H1 (cell line): ENCODE measurements at regions of chr11 and their contacts with region 1.

Region 1: GRCh38 chr11:131694526-131695424 is 324.4 kb downstream of the NTM start:
- DNase-seq: peak; percentile 63 to 96
- H3K4me3 ChIP-seq: peak overlapping the region in 1 of 4 experiments; percentile 35; a peak in 1 of 8 replicates
- H3K27ac ChIP-seq: no peak overlapping the region
- H3K4me1 ChIP-seq: peaks cover 0 to 5% (median 3%) of the 10 kb centered on the region in 4 experiments; a peak in 5 of 7 replicates
- H3K27me3 ChIP-seq: peaks cover 0 to 38% (median 21%) of the 10 kb centered on the region in 4 experiments; a peak in 6 of 7 replicates
- CTCF ChIP-seq: peak; percentile 94 to 99 (median 99)
- EP300 ChIP-seq: no peak
- POLR2A ChIP-seq: no peak
- RAD21 ChIP-seq: peak; percentile 89 to 90

Region 2: DNA sequence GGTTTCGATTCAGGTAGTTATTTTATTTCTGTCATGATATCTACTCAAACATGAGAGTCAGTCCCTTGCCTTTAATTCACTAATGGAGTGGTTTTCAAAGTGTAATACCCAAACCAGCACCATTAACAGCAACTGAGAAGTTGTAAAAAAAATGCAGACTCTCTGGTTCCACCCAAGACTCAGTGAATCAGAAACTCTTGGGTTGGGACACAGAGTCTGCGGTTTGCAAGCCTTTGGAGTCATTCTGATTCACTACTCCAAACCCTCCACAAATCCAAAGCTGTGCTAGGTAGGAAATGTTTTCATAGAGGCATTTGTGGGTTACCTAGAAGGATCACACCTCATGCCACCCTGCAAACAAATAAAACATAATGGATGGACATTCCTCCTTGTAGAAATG is 15.7 kb after region 1 on chr11:
- CTCF ChIA-PET with region 1: interaction called, 30 read pairs
- POLR2A ChIA-PET with region 1: interaction called, 3 read pairs
- DNase-seq: no peak
- H3K4me3 ChIP-seq: no peak overlapping the region
- H3K27ac ChIP-seq: no peak overlapping the region
- H3K4me1 ChIP-seq: no peaks in the 10 kb centered on the region
- H3K27me3 ChIP-seq: no peaks in the 10 kb centered on the region
- CTCF ChIP-seq: no peak
- EP300 ChIP-seq: no peak
- POLR2A ChIP-seq: no peak
- RAD21 ChIP-seq: no peak

Region 3: DNA sequence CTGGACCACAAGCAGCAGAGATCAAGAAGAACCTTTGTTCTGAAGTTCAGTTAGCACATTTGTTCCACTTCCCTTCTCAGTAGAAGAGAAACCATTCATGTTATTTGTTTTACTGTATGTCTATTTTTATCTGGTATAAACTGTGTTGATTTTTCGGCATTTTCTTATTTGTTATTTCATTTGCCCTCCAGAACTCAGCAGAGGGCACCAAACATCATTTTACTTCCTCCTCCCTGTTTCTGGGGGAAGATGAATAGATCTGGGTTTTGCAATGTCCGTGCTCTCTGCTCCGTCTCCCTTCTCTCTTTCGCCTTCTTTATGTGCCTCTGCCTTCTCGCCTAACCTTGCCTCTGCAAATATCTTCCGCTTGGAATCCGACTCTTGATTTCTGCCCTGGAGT is 42.6 kb after region 1 on chr11:
- CTCF ChIA-PET with region 1: interaction called, 11 read pairs
- POLR2A ChIA-PET with region 1: no interaction called
- DNase-seq: no peak
- H3K4me3 ChIP-seq: no peak overlapping the region
- H3K27ac ChIP-seq: no peak overlapping the region
- H3K4me1 ChIP-seq: peaks cover 0 to 6% (median 0%) of the 10 kb centered on the region in 4 experiments; a peak in 1 of 7 replicates
- H3K27me3 ChIP-seq: no peaks in the 10 kb centered on the region
- CTCF ChIP-seq: peak in 1 of 3 experiments; percentile 6; a peak in 1 of 4 replicates
- EP300 ChIP-seq: no peak
- POLR2A ChIP-seq: no peak
- RAD21 ChIP-seq: peak; percentile 21 to 32; a peak in 3 of 4 replicates

Region 4: DNA sequence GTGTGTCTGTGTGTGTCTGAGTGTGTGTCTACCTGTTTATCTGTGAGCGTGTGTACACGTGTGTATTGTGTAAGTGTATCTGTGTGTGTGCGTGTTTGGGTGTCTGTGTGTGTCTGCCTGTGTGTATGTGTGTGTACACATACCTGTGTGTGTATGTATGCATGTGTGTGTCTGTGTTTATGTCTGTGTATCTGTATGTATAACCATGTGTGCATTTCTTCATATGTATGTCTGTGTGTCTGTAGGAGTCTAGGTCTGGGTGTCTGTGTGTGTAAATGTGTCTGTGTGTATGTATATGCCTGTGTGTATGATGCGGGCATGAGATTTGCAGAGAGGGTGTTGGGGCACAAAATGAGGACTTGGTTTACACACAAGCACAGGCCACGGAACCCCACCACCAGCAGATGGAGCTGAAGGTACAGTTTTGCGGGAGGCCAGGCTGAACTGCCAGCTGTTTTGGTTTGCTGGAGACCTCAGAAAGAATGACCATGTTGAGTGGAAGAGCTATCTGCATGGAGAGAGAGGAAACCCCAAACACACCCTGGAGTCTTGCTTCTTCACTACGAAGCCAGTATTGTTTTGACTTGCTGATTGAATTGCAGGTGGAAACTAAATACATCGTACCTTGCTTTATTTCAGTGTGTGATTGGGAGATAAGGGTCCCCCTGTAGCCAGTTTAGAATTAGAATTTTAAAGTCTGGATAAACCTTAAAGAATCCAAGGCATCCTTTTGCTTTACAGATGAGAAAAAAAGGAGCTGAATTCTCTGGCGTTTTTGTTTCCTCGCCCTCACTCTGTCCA is 172.9 kb after region 1 on chr11:
- CTCF ChIA-PET with region 1: interaction called, 115 read pairs
- POLR2A ChIA-PET with region 1: interaction called, 3 read pairs
- DNase-seq: peak; percentile 68 to 86
- H3K4me3 ChIP-seq: no peak overlapping the region
- H3K27ac ChIP-seq: no peak overlapping the region
- H3K4me1 ChIP-seq: peaks cover 18 to 33% (median 20%) of the 10 kb centered on the region in 4 experiments
- H3K27me3 ChIP-seq: no peaks in the 10 kb centered on the region
- CTCF ChIP-seq: peak; percentile 91 to 98 (median 96)
- EP300 ChIP-seq: no peak
- POLR2A ChIP-seq: no peak
- RAD21 ChIP-seq: peak; percentile 96

Region 5: DNA sequence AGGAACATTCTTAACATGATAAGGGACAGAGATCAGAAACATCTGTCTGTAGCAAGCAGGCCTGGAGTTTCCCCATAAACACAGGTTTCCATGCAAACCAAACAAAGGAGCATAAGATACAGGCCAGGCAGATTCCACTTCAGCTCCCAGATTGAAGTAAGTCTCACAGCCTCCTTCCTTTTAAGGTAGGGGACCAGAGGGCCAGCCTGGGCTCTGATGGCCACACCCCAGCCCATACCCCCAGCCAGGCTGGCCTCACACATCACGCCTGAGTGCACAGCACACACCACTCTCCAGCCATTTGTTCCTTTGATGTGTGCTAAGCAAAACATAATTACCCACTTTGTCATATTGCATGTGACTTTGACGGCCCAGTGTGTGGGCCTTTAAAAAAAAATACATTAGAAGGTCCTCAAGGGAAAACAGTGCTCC is 194.4 kb after region 1 on chr11:
- CTCF ChIA-PET with region 1: interaction called, 13 read pairs
- POLR2A ChIA-PET with region 1: no interaction called
- DNase-seq: no peak
- H3K4me3 ChIP-seq: peak overlapping the region in 1 of 4 experiments; percentile 24; a peak in 1 of 8 replicates
- H3K27ac ChIP-seq: peak overlapping the region; percentile 69
- H3K4me1 ChIP-seq: peaks cover 20 to 36% (median 29%) of the 10 kb centered on the region in 4 experiments
- H3K27me3 ChIP-seq: no peaks in the 10 kb centered on the region
- CTCF ChIP-seq: no peak
- EP300 ChIP-seq: 0 out of 3 replicates have a peak, but pooled peaks of 1 of the 2 experiments have one; percentile 55
- POLR2A ChIP-seq: no peak; a peak in 1 of 3 replicates
- RAD21 ChIP-seq: no peak

Region 6: DNA sequence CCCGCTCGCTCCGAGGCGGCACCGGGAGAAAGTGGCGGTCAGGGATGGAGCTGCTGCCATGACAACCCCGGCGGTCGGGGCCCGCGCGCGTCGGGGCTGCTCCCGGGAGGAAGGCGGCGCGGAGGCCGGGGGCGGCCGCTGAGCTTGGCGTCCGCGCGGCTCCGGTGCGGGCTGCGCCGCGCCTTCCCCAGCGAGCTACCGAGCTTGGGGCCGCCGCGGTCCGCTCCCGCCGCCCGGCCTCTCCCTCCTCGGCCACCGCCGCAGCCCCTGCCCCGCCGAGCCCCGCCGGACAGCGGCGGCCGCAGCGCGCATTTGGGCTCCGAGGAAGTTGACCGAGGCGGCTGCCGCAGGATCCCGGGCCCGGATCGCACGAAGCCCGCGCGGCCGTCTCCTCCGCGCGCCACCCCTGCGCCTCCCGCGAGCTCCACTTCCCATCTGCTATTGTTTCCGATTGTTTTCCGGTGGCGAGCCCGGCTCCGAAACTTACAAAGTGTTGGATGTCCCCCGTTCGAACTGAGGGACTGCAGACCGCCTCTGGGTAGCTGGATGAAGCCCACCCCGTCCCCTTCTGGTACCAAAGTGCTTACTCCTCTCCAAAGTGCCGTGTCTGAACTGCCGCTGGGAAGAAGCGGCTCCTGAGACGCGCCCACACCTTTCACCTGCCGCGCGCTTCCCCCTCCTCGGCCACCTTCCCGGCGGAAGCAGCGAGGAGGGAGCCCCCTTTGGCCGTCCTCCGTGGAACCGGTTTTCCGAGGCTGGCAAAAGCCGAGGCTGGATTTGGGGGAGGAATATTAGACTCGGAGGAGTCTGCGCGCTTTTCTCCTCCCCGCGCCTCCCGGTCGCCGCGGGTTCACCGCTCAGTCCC is 216.0 kb after region 1 on chr11:
- CTCF ChIA-PET with region 1: interaction called, 50 read pairs
- POLR2A ChIA-PET with region 1: interaction called, 3 read pairs
- DNase-seq: peak in 1 of 2 experiments; percentile 74
- H3K4me3 ChIP-seq: peak overlapping the region; percentile 69 to 85 (median 76)
- H3K27ac ChIP-seq: no peak overlapping the region
- H3K4me1 ChIP-seq: peaks cover 4 to 15% (median 7%) of the 10 kb centered on the region in 4 experiments; a peak in 6 of 7 replicates
- H3K27me3 ChIP-seq: no peaks in the 10 kb centered on the region; a peak in 1 of 7 replicates
- CTCF ChIP-seq: no peak
- EP300 ChIP-seq: no peak
- POLR2A ChIP-seq: no peak
- RAD21 ChIP-seq: 0 out of 4 replicates have a peak, but pooled peaks of 1 of the 2 experiments have one; percentile 3

Region 7: GRCh38 chr11:132114185-132114584 is 419.4 kb after region 1 on chr11:
- CTCF ChIA-PET with region 1: interaction called, 13 read pairs
- POLR2A ChIA-PET with region 1: no interaction called
- DNase-seq: no peak
- H3K4me3 ChIP-seq: no peak overlapping the region
- H3K27ac ChIP-seq: no peak overlapping the region
- H3K4me1 ChIP-seq: peaks cover 2 to 15% (median 12%) of the 10 kb centered on the region in 4 experiments; a peak in 6 of 7 replicates
- H3K27me3 ChIP-seq: no peaks in the 10 kb centered on the region
- CTCF ChIP-seq: peak; percentile 77 to 88 (median 85)
- EP300 ChIP-seq: no peak
- POLR2A ChIP-seq: no peak
- RAD21 ChIP-seq: peak; percentile 72 to 85